A673 (cell line): ENCODE measurements at regions of chr3 and their contacts with region 1.

Region 1: DNA sequence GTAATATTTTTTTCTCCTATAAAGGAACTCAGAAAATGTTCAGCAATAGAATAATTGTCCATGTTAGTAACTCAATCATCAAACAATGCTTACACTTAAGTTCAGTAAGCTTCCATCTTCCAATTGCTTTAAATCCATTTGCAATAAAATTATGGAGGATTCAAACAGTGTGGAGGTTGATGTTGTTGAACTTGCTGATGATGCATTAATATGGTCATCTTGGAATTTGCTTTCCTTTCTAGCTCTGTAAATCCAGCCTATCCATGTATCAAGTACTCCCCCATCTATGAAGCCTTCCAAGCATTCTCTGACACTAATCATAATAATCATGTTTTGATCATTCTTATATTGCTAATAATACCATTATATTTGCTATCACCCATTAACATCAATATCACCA is 378.4 kb upstream of the CNTN3 start:
- DNase-seq: no peak
- H3K4me3 ChIP-seq: no peak overlapping the region
- H3K27ac ChIP-seq: no peak overlapping the region
- H3K4me1 ChIP-seq: no peaks in the 10 kb centered on the region
- H3K27me3 ChIP-seq: no peaks in the 10 kb centered on the region
- CTCF ChIP-seq: no peak

Region 2: DNA sequence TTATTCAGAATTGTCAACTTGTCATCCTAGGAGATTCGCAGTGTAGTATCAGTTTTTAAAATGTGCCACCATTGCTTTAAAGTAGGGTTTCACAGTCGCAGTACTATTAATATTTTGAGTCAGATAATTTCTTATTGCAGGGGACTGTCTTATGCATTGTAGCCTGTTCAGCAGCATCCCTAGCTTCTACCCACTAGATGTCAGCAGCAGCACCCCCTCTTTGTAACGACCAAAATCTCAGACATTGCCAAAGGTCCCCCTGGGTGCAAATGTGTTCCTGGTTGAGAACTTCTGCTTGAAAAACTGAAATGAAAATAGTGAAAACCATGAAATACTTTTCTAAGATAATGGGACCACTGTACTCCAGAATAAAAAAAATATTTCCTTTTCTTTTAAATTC is 853.2 kb before region 1 on chr3:
- CTCF ChIA-PET with region 1: no interaction called
- POLR2A ChIA-PET with region 1: no interaction called
- intact Hi-C with region 1: loop called (anchors 10 kb)
- DNase-seq: peak; percentile 13
- H3K4me3 ChIP-seq: no peak overlapping the region
- H3K27ac ChIP-seq: no peak overlapping the region
- H3K4me1 ChIP-seq: no peaks in the 10 kb centered on the region
- H3K27me3 ChIP-seq: no peaks in the 10 kb centered on the region
- CTCF ChIP-seq: 0 out of 2 replicates have a peak, but pooled peaks have one; percentile 18